ENCODE measurements at regions of chr1 and their contacts with region 1.

Region 1: GRCh38 chr1:150963321-150964163 is 11.1 kb downstream of the CERS2 start:
- DNase-seq: no peak
- ATAC-seq: no peak
- H3K4me3 ChIP-seq: no peak overlapping the region
- H3K4me3 Mint-ChIP-seq: no peak overlapping the region
- H3K27ac ChIP-seq: no peak overlapping the region
- H3K27ac Mint-ChIP-seq: no peak overlapping the region
- H3K4me1 ChIP-seq: no peaks in the 10 kb centered on the region
- H3K4me1 Mint-ChIP-seq: peaks cover 0 to 6% (median 0%) of the 10 kb centered on the region in 3 donors
- H3K27me3 ChIP-seq: no peaks in the 10 kb centered on the region
- H3K27me3 Mint-ChIP-seq: no peaks in the 10 kb centered on the region

Region 2: DNA sequence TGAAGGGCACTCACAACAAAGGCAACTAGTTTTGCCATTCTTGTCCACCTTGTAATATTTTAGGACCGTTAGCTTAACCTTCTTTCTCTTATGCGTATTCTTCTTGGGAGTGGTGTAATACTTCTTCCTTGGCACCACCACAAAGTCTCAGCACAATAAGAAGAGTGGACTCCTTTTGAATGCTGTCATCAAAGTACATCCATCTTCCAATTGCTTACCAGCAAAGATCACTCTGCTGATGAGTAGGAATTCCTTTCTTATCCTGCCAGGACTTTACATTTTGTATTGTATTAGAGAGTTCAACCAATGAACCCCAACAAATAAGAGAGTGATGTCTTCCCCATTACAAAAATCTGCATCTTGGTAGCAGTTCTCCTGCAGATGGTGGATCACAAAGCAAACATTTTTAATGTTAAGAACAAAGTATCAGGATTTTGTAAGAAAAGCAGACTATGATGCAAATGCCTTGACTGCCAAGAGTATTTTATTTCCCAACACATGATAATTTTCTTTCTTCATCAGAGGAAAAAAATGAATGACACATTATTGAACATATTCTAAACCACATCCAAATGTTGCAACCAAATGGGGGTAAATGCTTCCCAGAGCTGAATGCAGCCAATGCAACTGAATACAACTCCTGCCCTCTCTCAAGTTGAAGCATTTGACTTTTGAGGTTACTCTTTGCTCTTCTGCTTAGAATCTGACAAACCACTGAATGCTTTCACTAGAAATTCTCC is 82.0 kb before region 1 on chr1:
- CTCF ChIA-PET with region 1: interaction called in 1 of 2 experiments, 4 read pairs
- POLR2A ChIA-PET with region 1: interaction called in 1 of 2 experiments, 10 read pairs
- DNase-seq: no peak
- ATAC-seq: no peak
- H3K4me3 ChIP-seq: no peak overlapping the region
- H3K4me3 Mint-ChIP-seq: no peak overlapping the region
- H3K27ac ChIP-seq: no peak overlapping the region
- H3K27ac Mint-ChIP-seq: no peak overlapping the region
- H3K4me1 ChIP-seq: peaks cover 0 to 4% of the 10 kb centered on the region in 2 experiments
- H3K4me1 Mint-ChIP-seq: peaks cover 0 to 6% (median 4%) of the 10 kb centered on the region in 3 donors
- H3K27me3 ChIP-seq: no peaks in the 10 kb centered on the region
- H3K27me3 Mint-ChIP-seq: no peaks in the 10 kb centered on the region

Measured in T-cell (primary cell).